CD8-positive, alpha-beta T cell (primary cell): ENCODE measurements at regions of chr10 and their contacts with region 1.

Region 1: GRCh38 chr10:114304017-114304570 is 65.0 kb downstream of the VWA2 start:
- DNase-seq: peak; percentile 31 to 80 (median 67)
- ATAC-seq: peak; percentile 36
- H3K4me3 ChIP-seq: peak overlapping the region; percentile 59 to 69
- H3K4me3 Mint-ChIP-seq: peak overlapping the region; percentile 89
- H3K27ac ChIP-seq: peak overlapping the region; percentile 7 to 37
- H3K27ac Mint-ChIP-seq: peak overlapping the region; percentile 70
- H3K4me1 ChIP-seq: peaks cover 4% of the 10 kb centered on the region
- H3K4me1 Mint-ChIP-seq: peaks cover 10% of the 10 kb centered on the region
- H3K27me3 ChIP-seq: no peaks in the 10 kb centered on the region
- H3K27me3 Mint-ChIP-seq: no peaks in the 10 kb centered on the region
- CTCF ChIP-seq: peak; percentile 50

Region 2: GRCh38 chr10:113854011-113854760 is 449.9 kb before region 1 on chr10 and contains the starts of genes DCLRE1A and NHLRC2:
- CTCF ChIA-PET with region 1: no interaction called
- POLR2A ChIA-PET with region 1: no interaction called
- intact Hi-C with region 1: loop called in 1 of 2 experiments (anchors 10 kb)
- DNase-seq: peak; percentile 39 to 80 (median 64)
- ATAC-seq: peak; percentile 43
- H3K4me3 ChIP-seq: peak within 1 kb of the TSS; percentile 76 to 84
- H3K4me3 Mint-ChIP-seq: peak within 1 kb of the TSS; percentile 95
- H3K27ac ChIP-seq: peak within 1 kb of the TSS; percentile 73 to 83
- H3K27ac Mint-ChIP-seq: peak within 1 kb of the TSS; percentile 93
- H3K4me1 ChIP-seq: peaks cover 30% of the 10 kb centered on the region
- H3K4me1 Mint-ChIP-seq: peaks cover 63% of the 10 kb centered on the region
- H3K27me3 ChIP-seq: no peaks in the 10 kb centered on the region
- H3K27me3 Mint-ChIP-seq: no peaks in the 10 kb centered on the region
- CTCF ChIP-seq: no peak
- total RNA-seq, gene DCLRE1A: 0.49 to 0.89 TPM
- total RNA-seq, gene NHLRC2: 6.3 to 7.0 TPM

Region 3: GRCh38 chr10:114212153-114212552 is 91.9 kb before region 1 on chr10:
- CTCF ChIA-PET with region 1: no interaction called
- POLR2A ChIA-PET with region 1: no interaction called
- intact Hi-C with region 1: no loop called
- DNase-seq: no peak
- ATAC-seq: no peak
- H3K4me3 ChIP-seq: no peak overlapping the region
- H3K4me3 Mint-ChIP-seq: no peak overlapping the region
- H3K27ac ChIP-seq: no peak overlapping the region
- H3K27ac Mint-ChIP-seq: no peak overlapping the region
- H3K4me1 ChIP-seq: no peaks in the 10 kb centered on the region
- H3K4me1 Mint-ChIP-seq: no peaks in the 10 kb centered on the region
- H3K27me3 ChIP-seq: no peaks in the 10 kb centered on the region
- H3K27me3 Mint-ChIP-seq: peaks cover 8% of the 10 kb centered on the region
- CTCF ChIP-seq: no peak

Region 4: GRCh38 chr10:114285961-114286441 is 18.1 kb before region 1 on chr10:
- CTCF ChIA-PET with region 1: interaction called, 18 read pairs
- POLR2A ChIA-PET with region 1: no interaction called
- intact Hi-C with region 1: no loop called
- DNase-seq: no peak
- ATAC-seq: no peak
- H3K4me3 ChIP-seq: no peak overlapping the region
- H3K4me3 Mint-ChIP-seq: no peak overlapping the region
- H3K27ac ChIP-seq: no peak overlapping the region
- H3K27ac Mint-ChIP-seq: no peak overlapping the region
- H3K4me1 ChIP-seq: no peaks in the 10 kb centered on the region
- H3K4me1 Mint-ChIP-seq: no peaks in the 10 kb centered on the region
- H3K27me3 ChIP-seq: no peaks in the 10 kb centered on the region
- H3K27me3 Mint-ChIP-seq: no peaks in the 10 kb centered on the region
- CTCF ChIP-seq: no peak

Region 5: DNA sequence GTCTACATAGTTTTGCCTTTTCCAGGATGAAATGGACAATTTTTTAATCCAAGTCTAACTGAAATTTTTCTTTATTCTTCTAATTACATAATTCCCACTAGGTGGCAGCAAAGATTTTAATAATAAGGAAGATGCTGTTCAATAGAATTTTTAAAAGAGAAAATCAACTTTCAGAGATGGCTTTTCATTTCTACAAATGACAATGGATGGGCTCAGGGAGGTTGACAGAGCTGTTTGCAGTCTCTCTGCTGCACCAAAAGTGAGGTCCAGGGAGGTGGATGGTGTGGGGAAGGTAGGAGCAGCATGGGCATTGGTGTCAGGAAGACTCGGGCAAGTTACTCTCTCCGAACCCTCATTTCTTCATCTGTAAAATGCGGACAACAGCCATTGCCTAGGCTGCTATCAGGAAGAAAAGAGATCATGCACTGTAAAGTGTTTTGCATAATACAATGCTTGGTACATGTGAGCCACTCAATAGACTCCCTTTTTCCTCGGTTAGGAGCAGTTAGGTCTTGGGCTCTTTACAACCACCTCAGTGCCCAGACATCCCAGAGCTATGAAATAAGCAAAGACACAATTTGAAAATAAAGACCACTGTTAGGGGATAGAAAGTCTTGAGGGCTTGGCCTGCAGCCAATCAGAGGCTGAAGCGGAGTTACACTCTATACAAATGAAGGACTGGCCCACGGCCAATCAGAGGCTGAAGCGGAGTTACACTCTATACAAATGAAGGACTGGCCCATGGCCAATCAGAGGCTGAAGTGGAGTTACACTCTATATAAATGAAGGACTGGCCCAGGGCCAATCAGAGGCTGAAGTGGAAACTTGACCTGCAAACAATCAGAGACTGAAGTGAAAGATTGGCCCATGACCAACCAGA is 246.9 kb after region 1 on chr10:
- CTCF ChIA-PET with region 1: interaction called, 20 read pairs
- POLR2A ChIA-PET with region 1: no interaction called
- intact Hi-C with region 1: loop called (anchors 5 to 10 kb)
- DNase-seq: peak in 1 of 9 experiments; percentile 53
- ATAC-seq: no peak
- H3K4me3 ChIP-seq: no peak overlapping the region
- H3K4me3 Mint-ChIP-seq: no peak overlapping the region
- H3K27ac ChIP-seq: no peak overlapping the region
- H3K27ac Mint-ChIP-seq: no peak overlapping the region
- H3K4me1 ChIP-seq: peaks cover 30% of the 10 kb centered on the region
- H3K4me1 Mint-ChIP-seq: peaks cover 34% of the 10 kb centered on the region
- H3K27me3 ChIP-seq: no peaks in the 10 kb centered on the region
- H3K27me3 Mint-ChIP-seq: no peaks in the 10 kb centered on the region
- CTCF ChIP-seq: peak; percentile 80

Region 6: DNA sequence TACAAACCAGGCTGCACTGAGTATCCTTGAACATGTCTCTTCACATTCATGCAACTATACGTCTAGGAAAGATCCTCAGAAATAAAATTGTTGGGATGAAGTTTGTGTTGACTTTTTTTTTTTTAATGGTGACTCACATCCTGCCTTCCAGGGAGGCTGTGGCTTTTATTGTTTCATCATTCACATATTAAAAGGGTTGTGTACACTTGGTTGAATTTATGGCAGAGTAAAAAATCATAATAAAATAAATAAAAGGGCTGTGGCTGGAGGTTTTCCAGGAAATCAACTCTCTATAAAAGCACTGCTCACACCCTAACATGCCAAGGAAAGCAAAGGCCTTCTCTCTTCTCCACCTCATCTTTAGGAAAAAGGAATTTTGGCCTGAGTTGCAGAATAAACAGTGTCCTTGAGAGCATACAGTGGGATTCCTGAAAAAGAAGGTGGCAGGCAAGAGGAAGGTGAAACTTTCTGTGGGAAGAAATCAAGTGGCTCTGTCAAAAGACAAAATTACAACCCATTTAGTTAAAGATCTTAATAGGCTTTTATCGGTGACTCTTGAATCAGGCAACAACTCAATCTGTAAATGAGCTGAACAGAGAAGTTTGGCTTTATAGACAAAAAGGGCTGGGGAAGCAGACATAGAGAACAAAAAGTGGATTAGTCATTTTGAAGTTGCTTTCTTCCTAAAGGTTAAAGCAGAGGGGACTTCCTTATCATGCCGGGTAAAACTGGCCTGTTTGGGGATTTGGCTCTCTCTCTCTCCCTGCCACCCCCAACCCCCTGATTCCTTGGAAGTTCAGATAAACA is 475.9 kb after region 1 on chr10:
- CTCF ChIA-PET with region 1: interaction called, 54 read pairs
- POLR2A ChIA-PET with region 1: no interaction called
- intact Hi-C with region 1: no loop called
- DNase-seq: no peak
- ATAC-seq: no peak
- H3K4me3 ChIP-seq: no peak overlapping the region
- H3K4me3 Mint-ChIP-seq: no peak overlapping the region
- H3K27ac ChIP-seq: no peak overlapping the region
- H3K27ac Mint-ChIP-seq: no peak overlapping the region
- H3K4me1 ChIP-seq: no peaks in the 10 kb centered on the region
- H3K4me1 Mint-ChIP-seq: no peaks in the 10 kb centered on the region
- H3K27me3 ChIP-seq: no peaks in the 10 kb centered on the region
- H3K27me3 Mint-ChIP-seq: peaks cover 11% of the 10 kb centered on the region
- CTCF ChIP-seq: no peak

Region 7: GRCh38 chr10:114937962-114938855 is 634.1 kb after region 1 on chr10 and contains the start of gene TRUB1:
- CTCF ChIA-PET with region 1: no interaction called
- POLR2A ChIA-PET with region 1: no interaction called
- intact Hi-C with region 1: loop called in 1 of 2 experiments (anchors 1 kb)
- DNase-seq: peak; percentile 75 to 97 (median 90)
- ATAC-seq: peak; percentile 100
- H3K4me3 ChIP-seq: peak within 1 kb of the TSS; percentile 85 to 88
- H3K4me3 Mint-ChIP-seq: peak within 1 kb of the TSS; percentile 96
- H3K27ac ChIP-seq: peak within 1 kb of the TSS; percentile 73 to 91
- H3K27ac Mint-ChIP-seq: peak within 1 kb of the TSS; percentile 97
- H3K4me1 ChIP-seq: peaks cover 15% of the 10 kb centered on the region
- H3K4me1 Mint-ChIP-seq: peaks cover 37% of the 10 kb centered on the region
- H3K27me3 ChIP-seq: no peaks in the 10 kb centered on the region
- H3K27me3 Mint-ChIP-seq: no peaks in the 10 kb centered on the region
- CTCF ChIP-seq: no peak
- total RNA-seq, gene TRUB1: 7.7 to 9.7 TPM